Activated CD4-positive, alpha-beta memory T cell treated with anti-CD3 and anti-CD28 coated beads for 36 hours (primary cell): ENCODE measurements at regions of chr7 and their contacts with region 1.

Region 1: DNA sequence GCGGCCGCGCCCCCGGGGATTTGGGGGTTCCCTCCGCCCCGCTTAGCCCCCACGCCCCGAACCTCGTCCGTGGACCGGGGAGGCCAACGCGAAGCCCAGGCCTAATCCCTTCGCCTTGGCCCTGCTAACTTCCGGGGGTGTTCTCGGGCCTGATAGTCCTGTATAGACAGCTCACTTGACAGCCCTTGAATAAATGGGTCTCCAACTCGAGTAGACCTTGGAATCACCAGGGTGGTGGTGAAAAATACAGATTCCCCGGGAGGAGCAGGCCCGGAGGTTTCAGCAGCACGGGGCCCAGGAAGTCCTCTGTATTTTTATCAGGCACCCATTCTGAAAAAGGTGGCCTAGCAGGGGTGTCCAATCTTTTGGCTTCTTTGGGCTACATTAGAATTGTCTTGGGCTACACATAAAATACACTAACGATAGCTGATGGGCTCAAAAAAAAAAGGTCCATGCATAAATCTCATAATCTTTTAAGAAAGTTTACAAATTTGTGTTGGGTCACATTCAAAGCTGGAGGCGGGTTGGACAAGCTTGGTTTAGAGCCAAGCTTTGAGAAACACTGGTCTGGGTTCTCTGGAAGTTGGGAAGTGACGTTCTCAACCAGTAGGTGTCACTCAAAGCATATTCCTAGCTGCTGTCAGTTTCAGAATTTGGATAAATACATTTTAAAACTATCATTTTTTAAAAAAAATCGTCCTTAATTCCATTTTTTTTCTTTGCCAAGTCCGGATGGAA is 221.7 kb downstream of the PHTF2 start:
- DNase-seq: peak; percentile 42
- H3K4me3 Mint-ChIP-seq: peak overlapping the region; percentile 67
- H3K27ac Mint-ChIP-seq: peak overlapping the region; percentile 40
- H3K4me1 Mint-ChIP-seq: peaks cover 13% of the 10 kb centered on the region
- H3K27me3 Mint-ChIP-seq: peaks cover 13% of the 10 kb centered on the region

Region 2: DNA sequence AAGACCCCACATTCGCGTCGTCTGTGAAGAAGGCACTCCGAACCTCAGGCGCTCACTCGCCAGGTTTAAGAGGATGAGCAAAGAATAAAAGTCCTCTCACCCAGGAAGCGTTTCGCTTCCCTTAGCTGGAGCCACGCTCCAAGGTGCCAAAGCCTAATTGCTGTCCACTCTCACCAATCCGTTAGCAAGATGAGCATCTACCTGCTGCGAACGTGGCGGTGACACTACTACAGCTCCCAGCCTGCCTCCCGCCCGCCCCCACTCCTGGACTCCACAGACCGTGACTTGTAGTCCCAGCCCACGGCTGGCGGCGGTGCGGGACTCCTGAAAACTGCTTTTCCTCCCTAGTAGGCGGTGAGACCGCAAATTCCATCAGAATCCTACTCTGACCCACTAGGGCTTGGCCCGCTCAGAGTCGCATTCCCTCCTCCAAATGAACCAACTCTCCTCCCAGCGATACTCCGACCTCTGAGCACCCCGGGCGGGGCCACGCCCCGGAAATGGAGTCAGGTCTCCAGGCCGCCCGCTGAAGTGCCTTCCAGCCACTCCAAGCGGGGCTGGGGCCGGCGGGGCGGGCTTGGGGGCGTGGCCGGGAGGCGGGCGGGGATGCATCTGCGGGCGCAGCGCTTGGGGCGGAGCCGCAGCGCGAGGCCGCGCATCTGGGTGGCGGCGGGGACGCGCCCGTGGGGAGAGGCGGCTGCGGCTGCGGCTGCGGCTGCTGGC is 483.7 kb before region 1 on chr7:
- CTCF ChIA-PET with region 1: no interaction called
- POLR2A ChIA-PET with region 1: no interaction called
- intact Hi-C with region 1: loop called (anchors 5 kb)
- DNase-seq: peak; percentile 99
- H3K4me3 Mint-ChIP-seq: peak overlapping the region; percentile 97
- H3K27ac Mint-ChIP-seq: peak overlapping the region; percentile 87
- H3K4me1 Mint-ChIP-seq: peaks cover 13% of the 10 kb centered on the region
- H3K27me3 Mint-ChIP-seq: no peaks in the 10 kb centered on the region

Region 3: DNA sequence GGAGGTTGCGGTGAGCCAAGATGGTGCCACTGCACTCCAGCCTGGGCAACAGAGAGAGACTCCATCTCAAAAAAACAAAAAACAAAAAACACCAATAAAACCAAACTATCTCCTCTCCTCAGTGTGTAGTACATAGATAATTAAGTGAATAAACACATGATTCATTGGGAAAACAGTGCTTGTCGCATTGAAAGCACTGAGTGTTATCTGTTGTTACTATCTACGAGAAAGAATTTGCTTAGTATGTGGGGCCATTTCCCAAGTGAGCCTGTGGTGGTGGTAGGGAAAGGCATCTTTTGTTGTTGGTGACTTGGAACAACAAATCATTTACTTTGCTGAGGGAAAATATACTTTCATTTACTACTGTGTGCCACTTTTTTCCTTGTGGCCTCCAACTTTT is 281.4 kb before region 1 on chr7:
- CTCF ChIA-PET with region 1: no interaction called
- POLR2A ChIA-PET with region 1: no interaction called
- intact Hi-C with region 1: no loop called
- DNase-seq: no peak
- H3K4me3 Mint-ChIP-seq: no peak overlapping the region
- H3K27ac Mint-ChIP-seq: no peak overlapping the region
- H3K4me1 Mint-ChIP-seq: peaks cover 10% of the 10 kb centered on the region
- H3K27me3 Mint-ChIP-seq: no peaks in the 10 kb centered on the region

Region 4: GRCh38 chr7:77940647-77941046 is 79.7 kb before region 1 on chr7:
- CTCF ChIA-PET with region 1: interaction called, 3 read pairs
- POLR2A ChIA-PET with region 1: no interaction called
- intact Hi-C with region 1: loop called (anchors 5 kb)
- DNase-seq: peak; percentile 18
- H3K4me3 Mint-ChIP-seq: no peak overlapping the region
- H3K27ac Mint-ChIP-seq: no peak overlapping the region
- H3K4me1 Mint-ChIP-seq: peaks cover 13% of the 10 kb centered on the region
- H3K27me3 Mint-ChIP-seq: no peaks in the 10 kb centered on the region

Region 5: DNA sequence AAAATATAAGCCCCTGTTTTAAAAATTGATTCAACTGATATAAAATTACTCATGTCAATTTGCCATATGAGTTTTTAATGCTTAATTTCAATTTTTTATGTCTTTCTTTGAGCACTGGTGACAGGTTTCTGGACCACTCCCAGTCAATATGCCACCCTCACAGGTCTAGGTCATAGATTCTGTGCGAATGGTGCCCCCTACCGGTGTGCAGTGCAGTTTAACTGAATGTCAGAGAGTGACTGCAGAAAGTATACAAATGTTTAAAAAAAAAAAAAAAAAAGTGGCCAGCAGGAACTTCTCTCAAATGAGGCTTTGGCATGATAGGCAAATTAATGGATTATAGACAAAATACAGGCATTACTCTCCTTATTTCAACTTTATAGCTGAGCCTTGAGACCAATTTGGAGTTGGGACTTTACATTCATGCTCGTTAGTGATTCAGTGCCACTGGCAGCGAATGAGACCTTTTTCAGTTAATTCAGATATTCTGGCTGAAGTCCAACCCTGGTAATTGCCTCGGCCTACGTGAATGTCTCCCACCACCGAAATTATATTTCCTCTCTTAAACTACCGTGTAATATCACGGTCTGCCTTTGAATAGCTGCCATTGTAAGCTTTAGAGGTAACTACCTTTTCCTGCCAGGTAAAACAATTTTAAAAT is 205.9 kb after region 1 on chr7:
- CTCF ChIA-PET with region 1: no interaction called
- POLR2A ChIA-PET with region 1: no interaction called
- intact Hi-C with region 1: loop called (anchors 5 kb)
- DNase-seq: peak; percentile 51
- H3K4me3 Mint-ChIP-seq: no peak overlapping the region
- H3K27ac Mint-ChIP-seq: no peak overlapping the region
- H3K4me1 Mint-ChIP-seq: no peaks in the 10 kb centered on the region
- H3K27me3 Mint-ChIP-seq: peaks cover 7% of the 10 kb centered on the region

Region 6: GRCh38 chr7:80018941-80019752 is 1998.8 kb after region 1 on chr7:
- CTCF ChIA-PET with region 1: no interaction called
- POLR2A ChIA-PET with region 1: no interaction called
- intact Hi-C with region 1: loop called (anchors 2 kb)
- DNase-seq: peak; percentile 21
- H3K4me3 Mint-ChIP-seq: no peak overlapping the region
- H3K27ac Mint-ChIP-seq: no peak overlapping the region
- H3K4me1 Mint-ChIP-seq: no peaks in the 10 kb centered on the region
- H3K27me3 Mint-ChIP-seq: no peaks in the 10 kb centered on the region